CD14-positive monocyte (primary cell): ENCODE measurements at regions of chr17 and their contacts with region 1.

Region 1: GRCh38 chr17:1648963-1649843 is 463 bp downstream of the RILP start:
- DNase-seq: peak; percentile 93 to 98 (median 96)
- H3K4me3 ChIP-seq: peak overlapping the region; percentile 53 to 80 (median 63)
- H3K4me3 Mint-ChIP-seq: peak overlapping the region; percentile 82 to 88
- H3K27ac ChIP-seq: peak overlapping the region; percentile 76 to 90
- H3K27ac Mint-ChIP-seq: peak overlapping the region in 5 of 7 donors; percentile 45 to 88 (median 74)
- H3K4me1 ChIP-seq: peaks cover 49 to 60% of the 10 kb centered on the region in 2 donors
- H3K4me1 Mint-ChIP-seq: peaks cover 50% of the 10 kb centered on the region
- H3K27me3 ChIP-seq: no peaks in the 10 kb centered on the region
- H3K27me3 Mint-ChIP-seq: peaks cover 0 to 17% (median 3%) of the 10 kb centered on the region in 3 donors
- CTCF ChIP-seq: peak; percentile 91

Region 2: GRCh38 chr17:1365445-1366039 is 283.7 kb before region 1 on chr17:
- intact Hi-C with region 1: loop called in 1 of 2 experiments (anchors 10 kb)
- DNase-seq: peak; percentile 61 to 75 (median 74)
- H3K4me3 ChIP-seq: no peak overlapping the region
- H3K4me3 Mint-ChIP-seq: no peak overlapping the region
- H3K27ac ChIP-seq: no peak overlapping the region
- H3K27ac Mint-ChIP-seq: peak overlapping the region in 2 of 7 donors; percentile 26 to 70
- H3K4me1 ChIP-seq: peaks cover 47 to 53% of the 10 kb centered on the region in 2 donors
- H3K4me1 Mint-ChIP-seq: peaks cover 64% of the 10 kb centered on the region
- H3K27me3 ChIP-seq: no peaks in the 10 kb centered on the region
- H3K27me3 Mint-ChIP-seq: peaks cover 0 to 2% (median 0%) of the 10 kb centered on the region in 3 donors
- CTCF ChIP-seq: peak; percentile 85

Region 3: GRCh38 chr17:1555651-1556471 is 93.3 kb before region 1 on chr17:
- intact Hi-C with region 1: no loop called
- DNase-seq: peak; percentile 85 to 96 (median 92)
- H3K4me3 ChIP-seq: peak overlapping the region in 1 of 3 experiments; percentile 21
- H3K4me3 Mint-ChIP-seq: peak overlapping the region; percentile 62 to 74
- H3K27ac ChIP-seq: peak overlapping the region; percentile 67 to 76
- H3K27ac Mint-ChIP-seq: peak overlapping the region; percentile 93 to 99 (median 98)
- H3K4me1 ChIP-seq: peaks cover 27 to 38% of the 10 kb centered on the region in 2 donors
- H3K4me1 Mint-ChIP-seq: peaks cover 52% of the 10 kb centered on the region
- H3K27me3 ChIP-seq: no peaks in the 10 kb centered on the region
- H3K27me3 Mint-ChIP-seq: peaks cover 0 to 3% (median 2%) of the 10 kb centered on the region in 3 donors
- CTCF ChIP-seq: no peak

Region 4: GRCh38 chr17:1611715-1612114 is 37.5 kb before region 1 on chr17:
- intact Hi-C with region 1: loop called in 1 of 2 experiments (anchors 5 kb)
- DNase-seq: peak; percentile 76 to 96 (median 91)
- H3K4me3 ChIP-seq: peak overlapping the region in 1 of 3 experiments; percentile 47
- H3K4me3 Mint-ChIP-seq: peak overlapping the region; percentile 65 to 67
- H3K27ac ChIP-seq: peak overlapping the region; percentile 81 to 89
- H3K27ac Mint-ChIP-seq: peak overlapping the region; percentile 94 to 99 (median 96)
- H3K4me1 ChIP-seq: peaks cover 84 to 86% of the 10 kb centered on the region in 2 donors
- H3K4me1 Mint-ChIP-seq: peaks cover 80% of the 10 kb centered on the region
- H3K27me3 ChIP-seq: no peaks in the 10 kb centered on the region
- H3K27me3 Mint-ChIP-seq: peaks cover 0 to 2% (median 0%) of the 10 kb centered on the region in 3 donors
- CTCF ChIP-seq: no peak

Region 5: GRCh38 chr17:1716076-1716995 is 67.1 kb after region 1 on chr17:
- intact Hi-C with region 1: loop called in 1 of 2 experiments (anchors 10 kb)
- DNase-seq: peak; percentile 100
- H3K4me3 ChIP-seq: peak overlapping the region; percentile 84 to 96 (median 92)
- H3K4me3 Mint-ChIP-seq: peak overlapping the region; percentile 92 to 93
- H3K27ac ChIP-seq: peak overlapping the region; percentile 97 to 98
- H3K27ac Mint-ChIP-seq: peak overlapping the region; percentile 98 to 99 (median 99)
- H3K4me1 ChIP-seq: peaks cover 34 to 41% of the 10 kb centered on the region in 2 donors
- H3K4me1 Mint-ChIP-seq: peaks cover 39% of the 10 kb centered on the region
- H3K27me3 ChIP-seq: peaks cover 0 to under 1% of the 10 kb centered on the region in 2 donors
- H3K27me3 Mint-ChIP-seq: peaks cover 4 to 20% (median 5%) of the 10 kb centered on the region in 3 donors
- CTCF ChIP-seq: no peak